Endothelial cell of umbilical vein (primary cell): ENCODE measurements at regions of chr22 and their contacts with region 1.

Region 1: DNA sequence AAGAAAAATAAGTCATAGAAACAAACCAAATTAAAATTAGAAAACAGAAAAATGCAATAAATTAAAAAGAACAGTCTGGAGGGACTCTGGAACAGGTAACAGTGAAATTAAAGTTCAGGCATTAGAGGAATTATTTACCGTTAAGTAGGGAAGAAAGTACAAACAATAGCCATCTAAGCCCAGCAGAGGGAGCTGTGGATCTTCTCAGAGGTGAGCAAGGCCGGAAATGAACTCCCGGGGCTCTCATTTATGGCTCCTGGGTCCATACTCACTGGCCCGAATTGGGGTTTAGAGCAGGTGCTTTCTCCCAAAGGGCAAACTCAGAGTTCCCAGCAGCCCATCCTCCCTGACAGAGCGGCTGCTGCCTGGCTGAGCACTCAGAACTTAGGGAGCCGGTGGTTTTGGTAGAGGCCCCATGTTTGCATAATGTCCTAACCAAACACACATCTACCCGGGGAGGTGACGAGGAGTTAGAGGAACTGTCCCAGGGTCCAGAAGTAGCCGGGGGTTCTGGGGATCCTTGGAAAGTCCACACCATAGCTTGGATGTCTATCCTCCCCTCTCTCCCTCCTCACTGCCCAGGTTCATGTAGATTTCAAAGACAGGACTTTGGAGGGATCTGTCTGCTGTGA is 87.8 kb upstream of the VPREB1 start:
- DNase-seq: peak; percentile 50
- H3K4me3 ChIP-seq: no peak overlapping the region
- H3K27ac ChIP-seq: no peak overlapping the region
- H3K4me1 ChIP-seq: no peaks in the 10 kb centered on the region
- H3K27me3 ChIP-seq: peaks cover 20 to 32% of the 10 kb centered on the region in 2 experiments
- CTCF ChIP-seq: peak; percentile 77 to 79
- POLR2A ChIP-seq: no peak

Region 2: GRCh38 chr22:22138915-22139314 is 17.9 kb before region 1 on chr22:
- CTCF ChIA-PET with region 1: interaction called, 19 read pairs
- POLR2A ChIA-PET with region 1: no interaction called
- dilution Hi-C with region 1: no loop called
- intact Hi-C with region 1: no loop called
- DNase-seq: no peak
- H3K4me3 ChIP-seq: no peak overlapping the region
- H3K27ac ChIP-seq: no peak overlapping the region
- H3K4me1 ChIP-seq: no peaks in the 10 kb centered on the region
- H3K27me3 ChIP-seq: peaks cover 36 to 76% of the 10 kb centered on the region in 2 experiments
- CTCF ChIP-seq: no peak
- POLR2A ChIP-seq: no peak

Region 3: GRCh38 chr22:22168190-22168940 is 11.5 kb after region 1 on chr22:
- CTCF ChIA-PET with region 1: interaction called, 15 read pairs
- POLR2A ChIA-PET with region 1: no interaction called
- dilution Hi-C with region 1: no loop called
- intact Hi-C with region 1: no loop called
- DNase-seq: no peak
- H3K4me3 ChIP-seq: no peak overlapping the region
- H3K27ac ChIP-seq: no peak overlapping the region
- H3K4me1 ChIP-seq: no peaks in the 10 kb centered on the region
- H3K27me3 ChIP-seq: peaks cover 9 to 12% of the 10 kb centered on the region in 2 experiments
- CTCF ChIP-seq: no peak
- POLR2A ChIP-seq: no peak